HepG2 (cell line): ENCODE measurements at regions of chr6 and their contacts with region 1.

Region 1: GRCh38 chr6:36678518-36679027 is at the start of gene CDKN1A:
- DNase-seq: peak; percentile 87
- ATAC-seq: peak; percentile 87
- H3K4me3 ChIP-seq: peak within 1 kb of the TSS; percentile 73 to 99 (median 94)
- H3K27ac ChIP-seq: peak within 1 kb of the TSS; percentile 92
- H3K4me1 ChIP-seq: peaks cover 76% of the 10 kb centered on the region
- H3K27me3 ChIP-seq: peaks cover 0 to 6% of the 10 kb centered on the region in 2 experiments; a peak in 1 of 5 replicates
- CTCF ChIP-seq: peak; percentile 7; the same call in 1 of the 2 replicates
- EP300 ChIP-seq: peak; percentile 10 to 61; a peak in 3 of 4 replicates
- POLR2A ChIP-seq: peak in 1 of 2 experiments; percentile 98; a peak in 2 of 4 replicates
- RAD21 ChIP-seq: no peak; the same call in 1 of the 2 replicates
- total RNA-seq, gene CDKN1A: 56.0 and 60.7 TPM in 2 replicates

Region 2: DNA sequence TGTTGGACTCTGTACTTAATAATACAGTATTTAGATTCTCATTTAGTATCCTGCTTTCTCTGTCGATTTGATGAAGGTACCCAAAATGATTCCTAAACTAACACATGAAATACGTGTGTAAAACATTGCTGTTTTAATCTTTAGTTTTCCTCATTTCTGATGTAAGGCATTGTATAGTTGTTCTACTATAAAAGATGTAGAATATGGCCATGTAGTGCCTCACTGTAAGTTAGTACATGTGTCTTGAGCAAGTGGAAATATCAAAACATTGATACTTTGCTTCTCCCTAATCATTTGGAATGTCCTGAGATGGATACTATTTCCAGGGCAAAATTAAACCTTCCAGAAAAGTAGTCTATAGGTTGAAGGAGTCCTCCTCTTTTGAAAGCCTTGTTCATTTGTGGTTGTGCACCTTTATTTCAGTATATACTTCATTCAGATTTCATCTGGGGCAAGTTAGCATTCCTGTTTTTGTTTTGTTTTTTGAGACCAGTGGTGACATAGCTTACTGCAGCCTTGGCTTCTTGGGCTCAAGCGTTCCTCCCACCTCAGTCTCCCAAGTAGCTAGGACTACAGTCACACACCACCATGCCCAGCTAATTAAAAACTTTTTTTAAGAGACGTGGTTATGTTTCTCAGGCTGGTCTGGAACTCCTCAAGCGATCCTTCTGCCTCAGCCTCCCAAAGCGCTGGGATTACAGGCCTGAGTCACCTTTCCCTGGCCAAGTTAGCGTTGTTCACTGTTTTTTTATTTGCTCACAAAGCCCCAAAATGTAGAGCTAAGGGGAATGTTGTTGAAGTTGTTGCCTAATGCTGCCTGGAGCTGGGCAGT is 72.8 kb before region 1 on chr6:
- CTCF ChIA-PET with region 1: no interaction called
- POLR2A ChIA-PET with region 1: interaction called, 50 read pairs
- in situ Hi-C with region 1: no loop called
- intact Hi-C with region 1: no loop called
- DNase-seq: no peak
- ATAC-seq: no peak
- H3K4me3 ChIP-seq: no peak overlapping the region
- H3K27ac ChIP-seq: no peak overlapping the region
- H3K4me1 ChIP-seq: peaks cover 93% of the 10 kb centered on the region
- H3K27me3 ChIP-seq: no peaks in the 10 kb centered on the region
- CTCF ChIP-seq: no peak
- EP300 ChIP-seq: no peak
- POLR2A ChIP-seq: peak; percentile 23 to 66; a peak in 2 of 4 replicates
- RAD21 ChIP-seq: no peak

Region 3: GRCh38 chr6:36633915-36634314 is 44.7 kb before region 1 on chr6:
- CTCF ChIA-PET with region 1: no interaction called
- POLR2A ChIA-PET with region 1: interaction called, 21 read pairs
- in situ Hi-C with region 1: no loop called
- intact Hi-C with region 1: no loop called
- DNase-seq: peak; percentile 70
- ATAC-seq: peak; percentile 68
- H3K4me3 ChIP-seq: peak overlapping the region in 1 of 3 experiments; percentile 24; a peak in 1 of 6 replicates
- H3K27ac ChIP-seq: no peak overlapping the region
- H3K4me1 ChIP-seq: peaks cover 57% of the 10 kb centered on the region
- H3K27me3 ChIP-seq: peaks cover 6 to 50% of the 10 kb centered on the region in 2 experiments
- CTCF ChIP-seq: no peak
- EP300 ChIP-seq: no peak
- POLR2A ChIP-seq: no peak
- RAD21 ChIP-seq: no peak

Region 4: GRCh38 chr6:36650848-36651478 is 27.6 kb before region 1 on chr6:
- CTCF ChIA-PET with region 1: no interaction called
- POLR2A ChIA-PET with region 1: interaction called, 109 read pairs
- in situ Hi-C with region 1: no loop called
- intact Hi-C with region 1: no loop called
- DNase-seq: peak; percentile 59
- ATAC-seq: peak; percentile 58
- H3K4me3 ChIP-seq: no peak overlapping the region
- H3K27ac ChIP-seq: no peak overlapping the region
- H3K4me1 ChIP-seq: peaks cover 43% of the 10 kb centered on the region
- H3K27me3 ChIP-seq: peaks cover 0 to 38% of the 10 kb centered on the region in 2 experiments; a peak in 4 of 5 replicates
- CTCF ChIP-seq: no peak
- EP300 ChIP-seq: no peak
- POLR2A ChIP-seq: no peak
- RAD21 ChIP-seq: no peak

Region 5: DNA sequence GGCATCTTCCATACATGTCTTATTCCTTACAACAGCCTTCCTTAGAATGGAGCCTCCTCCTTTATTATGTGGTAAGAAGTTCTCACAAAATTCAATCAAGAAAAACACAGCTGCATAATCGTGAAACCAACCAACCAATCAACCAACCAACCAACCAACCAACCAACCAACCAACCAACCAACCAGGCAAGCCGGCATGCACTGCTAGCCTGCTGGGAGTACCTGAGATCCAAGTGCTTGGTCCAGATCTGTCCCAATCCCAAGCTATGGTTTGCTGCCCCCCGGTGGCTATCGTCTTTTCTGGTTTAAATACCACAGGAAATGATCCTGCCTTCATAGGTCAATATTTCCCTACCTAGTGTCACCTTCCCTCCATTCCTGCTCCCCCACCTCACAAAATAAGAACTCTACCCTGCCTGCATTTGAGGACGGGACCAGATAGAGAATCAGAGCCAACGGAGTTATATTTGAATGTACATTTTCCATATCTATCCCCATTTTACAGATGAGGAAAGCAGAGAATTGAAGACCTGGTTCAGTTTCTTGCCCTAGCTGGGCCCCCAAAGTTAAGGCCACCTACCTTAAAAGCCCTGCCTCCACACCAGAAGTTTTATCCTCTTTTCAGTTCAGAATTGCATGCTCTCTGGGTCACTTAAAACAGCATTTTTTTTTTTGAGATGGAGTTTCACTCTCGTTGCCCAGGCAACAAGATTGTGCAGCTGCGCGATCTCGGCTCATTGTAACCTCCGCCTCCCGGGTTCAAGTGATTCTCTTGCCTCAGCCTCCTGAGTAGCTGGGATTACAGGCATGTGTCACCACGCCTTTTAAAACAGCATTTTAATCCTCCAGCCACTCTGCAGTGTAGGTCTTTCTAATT is 46.2 kb after region 1 on chr6:
- CTCF ChIA-PET with region 1: interaction called, 4 read pairs
- POLR2A ChIA-PET with region 1: no interaction called
- in situ Hi-C with region 1: no loop called
- intact Hi-C with region 1: loop called (anchors 5 kb)
- DNase-seq: peak; percentile 77
- ATAC-seq: peak; percentile 88
- H3K4me3 ChIP-seq: no peak overlapping the region
- H3K27ac ChIP-seq: no peak overlapping the region
- H3K4me1 ChIP-seq: no peaks in the 10 kb centered on the region
- H3K27me3 ChIP-seq: peaks cover 7 to 45% of the 10 kb centered on the region in 2 experiments; a peak in 3 of 5 replicates
- CTCF ChIP-seq: peak; percentile 93
- EP300 ChIP-seq: no peak
- POLR2A ChIP-seq: no peak
- RAD21 ChIP-seq: peak; percentile 93

Region 6: GRCh38 chr6:36865835-36866234 is 187.3 kb after region 1 on chr6:
- CTCF ChIA-PET with region 1: no interaction called
- POLR2A ChIA-PET with region 1: no interaction called
- in situ Hi-C with region 1: no loop called
- intact Hi-C with region 1: no loop called
- DNase-seq: no peak
- ATAC-seq: no peak
- H3K4me3 ChIP-seq: no peak overlapping the region
- H3K27ac ChIP-seq: no peak overlapping the region
- H3K4me1 ChIP-seq: no peaks in the 10 kb centered on the region
- H3K27me3 ChIP-seq: no peaks in the 10 kb centered on the region
- CTCF ChIP-seq: no peak
- EP300 ChIP-seq: no peak
- POLR2A ChIP-seq: no peak
- RAD21 ChIP-seq: no peak